Activated T-helper 2 cell treated with anti-CD3 and anti-CD28 coated beads, Interferon-gamma antibody, Interleukin-2, Interleukin-4, amounts not matched to agents 10 μg/mL and 5 μg/mL and 100 μg/mL, durations not matched to agents 14 hours and 24 hours and 36 hours (primary cell): ENCODE measurements at regions of chr2 and their contacts with region 1.

Region 1: GRCh38 chr2:85524336-85524933 is 14.5 kb upstream of the MAT2A start:
- DNase-seq: no peak
- H3K4me3 Mint-ChIP-seq: no peak overlapping the region
- H3K27ac Mint-ChIP-seq: no peak overlapping the region
- H3K4me1 Mint-ChIP-seq: peaks cover 9% of the 10 kb centered on the region
- H3K27me3 Mint-ChIP-seq: peaks cover 24% of the 10 kb centered on the region

Region 2: DNA sequence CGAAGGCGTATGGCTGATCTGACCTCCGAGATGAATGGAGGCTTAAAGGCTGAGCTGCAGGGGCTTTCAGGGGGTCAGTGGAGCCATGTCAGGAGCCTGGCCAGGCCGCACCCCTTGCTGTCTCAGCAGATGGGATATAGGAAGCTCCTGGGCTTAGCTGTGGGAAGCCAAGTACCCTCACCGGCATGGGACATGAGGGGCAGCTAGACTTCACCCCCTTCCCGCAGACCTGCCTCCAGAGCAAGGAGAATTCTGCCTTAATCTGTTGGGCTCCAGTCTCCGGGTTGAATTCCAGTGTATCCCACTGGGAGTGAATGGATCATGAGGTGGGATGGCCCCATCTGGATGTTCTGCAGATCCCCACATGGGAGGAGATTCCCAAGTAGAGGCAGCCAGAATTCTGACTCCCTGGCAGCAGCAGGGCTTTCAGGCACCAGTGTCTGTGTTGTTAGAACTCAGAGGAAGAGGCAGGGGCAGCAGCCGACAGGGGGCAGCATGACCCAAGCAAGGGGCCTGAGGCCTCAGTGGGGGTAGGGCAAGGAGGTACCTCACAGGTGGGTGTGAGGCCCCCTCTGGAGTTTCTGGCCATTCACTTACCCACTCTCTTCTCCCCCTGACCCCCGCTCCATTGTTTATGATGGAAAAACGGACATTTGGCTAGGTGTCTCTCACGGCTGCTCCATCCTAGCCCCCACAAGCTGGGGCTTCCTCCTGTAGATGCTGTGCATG is 133.3 kb before region 1 on chr2:
- intact Hi-C with region 1: no loop called
- DNase-seq: peak; percentile 54
- H3K4me3 Mint-ChIP-seq: no peak overlapping the region
- H3K27ac Mint-ChIP-seq: no peak overlapping the region
- H3K4me1 Mint-ChIP-seq: peaks cover 4% of the 10 kb centered on the region
- H3K27me3 Mint-ChIP-seq: no peaks in the 10 kb centered on the region

Region 3: DNA sequence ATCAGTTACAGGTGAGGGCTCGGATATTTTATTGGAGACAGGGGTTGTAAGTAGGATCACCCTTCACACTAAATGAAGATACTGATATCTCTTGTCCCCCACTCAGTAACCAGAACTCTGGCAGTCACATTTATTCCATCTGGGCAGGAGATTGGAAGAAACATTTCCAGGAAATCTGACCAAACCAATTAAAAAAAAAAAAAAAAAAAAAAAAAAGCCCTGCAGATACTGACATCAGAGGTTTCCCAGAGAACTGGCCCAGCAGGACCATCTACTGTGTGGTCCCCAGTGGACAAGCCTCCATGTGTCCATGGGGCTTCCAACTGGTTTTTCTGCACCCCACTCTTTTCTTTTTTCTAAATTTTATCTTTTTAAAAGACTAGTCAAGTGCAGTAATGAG is 64.7 kb before region 1 on chr2:
- intact Hi-C with region 1: loop called (anchors 5 kb)
- DNase-seq: no peak
- H3K4me3 Mint-ChIP-seq: no peak overlapping the region
- H3K27ac Mint-ChIP-seq: no peak overlapping the region
- H3K4me1 Mint-ChIP-seq: no peaks in the 10 kb centered on the region
- H3K27me3 Mint-ChIP-seq: peaks cover 2% of the 10 kb centered on the region

Region 4: DNA sequence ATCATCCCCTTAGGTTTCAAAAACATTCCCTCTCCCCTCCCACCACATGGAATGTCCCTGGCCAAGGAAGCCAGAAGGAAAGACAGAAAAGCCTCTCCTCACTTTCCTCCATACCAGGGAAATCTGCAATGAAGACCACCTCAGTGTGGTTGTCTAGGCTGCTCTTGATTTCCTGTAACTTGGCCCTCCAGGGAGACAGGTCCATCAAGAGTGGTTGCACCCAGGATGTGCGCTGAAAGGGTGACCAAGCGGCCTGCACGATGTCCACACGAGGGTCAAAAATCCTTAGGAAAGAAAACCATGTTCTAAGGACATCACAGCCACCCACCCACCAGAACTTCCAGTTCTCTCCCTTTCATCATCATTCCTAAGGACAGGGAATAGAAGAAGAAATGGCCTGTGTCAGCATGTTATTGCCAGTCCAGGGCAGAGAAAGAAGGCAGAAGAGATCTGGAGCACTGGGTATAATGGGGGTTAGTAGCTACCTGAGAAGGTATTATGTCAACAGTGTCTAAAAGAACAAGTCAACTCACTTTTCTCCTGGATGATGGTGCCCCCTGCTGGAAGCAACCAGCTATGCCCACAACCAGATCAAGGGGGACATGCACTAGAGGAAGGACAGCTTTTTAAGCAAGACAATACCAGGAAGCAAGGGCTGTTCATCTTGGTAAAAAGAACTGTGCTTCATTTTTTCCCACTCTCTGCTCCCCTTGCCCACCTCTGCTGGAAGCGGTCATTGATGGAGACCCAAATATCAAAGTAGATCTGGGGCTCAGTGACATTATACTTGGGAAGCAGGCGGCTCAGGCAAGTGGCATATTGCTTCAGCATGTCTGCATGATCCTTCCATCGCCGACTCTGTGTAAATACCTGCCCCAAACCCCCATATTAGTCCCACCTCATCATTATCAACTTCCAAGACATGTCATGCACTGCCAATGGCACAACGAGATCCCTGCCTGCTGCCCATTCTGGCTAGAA is 27.6 kb after region 1 on chr2:
- intact Hi-C with region 1: no loop called
- DNase-seq: peak; percentile 80
- H3K4me3 Mint-ChIP-seq: no peak overlapping the region
- H3K27ac Mint-ChIP-seq: no peak overlapping the region
- H3K4me1 Mint-ChIP-seq: peaks cover 3% of the 10 kb centered on the region
- H3K27me3 Mint-ChIP-seq: no peaks in the 10 kb centered on the region